Ascending aorta (tissue), 2 donors: ENCODE measurements at regions of chr4 and their contacts with region 1.

Region 1: GRCh38 chr4:127732613-127733328 is 2.6 kb downstream of the SLC25A31 start:
- DNase-seq: no peak
- H3K4me3 ChIP-seq: no peak overlapping the region
- H3K27ac ChIP-seq: no peak overlapping the region
- H3K4me1 ChIP-seq: no peaks in the 10 kb centered on the region
- H3K27me3 ChIP-seq: no peaks in the 10 kb centered on the region
- CTCF ChIP-seq: peak; percentile 36 to 63 (median 55)

Region 2: GRCh38 chr4:127604949-127605709 is 127.6 kb before region 1 on chr4:
- intact Hi-C with region 1: loop called (anchors 1 kb)
- DNase-seq: no peak
- H3K4me3 ChIP-seq: no peak overlapping the region
- H3K27ac ChIP-seq: no peak overlapping the region
- H3K4me1 ChIP-seq: no peaks in the 10 kb centered on the region
- H3K27me3 ChIP-seq: no peaks in the 10 kb centered on the region
- CTCF ChIP-seq: peak; percentile 20 to 61 (median 49)

Region 3: GRCh38 chr4:127870688-127871087 is 137.9 kb after region 1 on chr4:
- intact Hi-C with region 1: no loop called
- DNase-seq: no peak
- H3K4me3 ChIP-seq: peak overlapping the region in 1 of 2 donors; percentile 20
- H3K27ac ChIP-seq: peak overlapping the region; percentile 41 to 63
- H3K4me1 ChIP-seq: no peaks in the 10 kb centered on the region
- H3K27me3 ChIP-seq: no peaks in the 10 kb centered on the region
- CTCF ChIP-seq: no peak